ENCODE measurements at regions of chr10 and their contacts with region 1.

Region 1: DNA sequence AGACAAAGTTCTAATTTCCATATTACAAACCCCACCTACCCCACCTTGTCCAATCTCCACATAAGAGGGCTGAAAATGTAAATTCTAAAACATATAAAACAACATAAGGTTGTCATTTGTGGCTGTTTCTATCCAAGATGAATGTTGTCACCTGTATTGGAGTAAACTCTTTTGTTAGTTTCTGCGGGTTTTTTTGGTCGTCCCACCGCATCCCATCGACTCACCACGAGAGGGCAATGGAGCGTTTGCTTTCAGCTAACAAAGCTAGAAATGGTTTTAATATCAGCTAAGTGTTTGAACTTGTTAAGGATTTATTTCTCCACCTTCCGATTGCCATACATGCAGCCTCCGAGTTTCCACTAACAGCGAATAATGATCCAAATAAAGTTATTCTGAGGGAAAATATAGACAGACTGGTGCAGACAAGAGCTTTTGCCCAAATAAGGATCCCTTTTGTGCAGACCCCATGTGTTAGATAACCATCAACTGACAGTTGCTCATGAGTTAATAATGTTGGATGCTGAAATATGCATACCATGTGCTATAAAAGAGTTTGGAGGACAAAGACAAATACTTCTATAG is 137.2 kb downstream of the ARID5B start:
- DNase-seq: no peak
- ATAC-seq: peak; percentile 83
- H3K4me3 ChIP-seq: no peak overlapping the region
- H3K27ac ChIP-seq: peak overlapping the region; percentile 16
- H3K4me1 ChIP-seq: peaks cover 44% of the 10 kb centered on the region
- H3K27me3 ChIP-seq: no peaks in the 10 kb centered on the region
- CTCF ChIP-seq: peak; percentile 70 to 86 (median 81)
- EP300 ChIP-seq: no peak
- POLR2A ChIP-seq: no peak
- RAD21 ChIP-seq: peak; percentile 96

Region 2: DNA sequence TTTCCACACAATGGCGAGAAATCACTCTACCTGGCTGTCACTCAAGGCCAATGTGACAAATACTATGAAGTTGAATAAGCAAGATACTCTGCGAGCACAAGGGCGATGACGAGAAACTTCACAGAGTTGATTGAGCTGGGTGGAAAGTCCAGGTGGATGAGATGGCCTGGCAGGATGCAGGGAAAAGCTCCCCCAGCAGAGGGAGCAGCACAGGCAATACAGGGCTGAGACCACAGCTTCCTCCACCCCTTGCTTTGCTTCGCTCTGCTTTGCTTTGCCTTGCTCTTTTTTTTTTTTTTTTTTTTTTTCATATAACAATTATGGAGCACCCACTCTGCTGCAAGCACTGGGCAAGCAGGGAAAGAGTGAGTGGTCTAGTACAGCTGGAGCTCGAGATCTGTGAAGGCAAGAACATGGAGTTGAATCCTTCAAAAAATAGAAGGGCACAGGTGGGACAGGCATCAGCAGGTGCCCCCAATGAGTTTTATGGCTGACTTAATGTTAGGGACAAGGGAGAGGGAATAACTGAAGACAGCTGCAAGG is 287.7 kb before region 1 on chr10:
- CTCF ChIA-PET with region 1: interaction called, 6 read pairs
- POLR2A ChIA-PET with region 1: no interaction called
- RAD21 ChIA-PET with region 1: interaction called, 6 read pairs
- SMC1A ChIA-PET with region 1: interaction called, 5 read pairs
- in situ Hi-C with region 1: no loop called
- intact Hi-C with region 1: loop called (anchors 10 kb)
- DNase-seq: peak; percentile 27
- ATAC-seq: peak; percentile 98
- H3K4me3 ChIP-seq: no peak overlapping the region
- H3K27ac ChIP-seq: no peak overlapping the region
- H3K4me1 ChIP-seq: peaks cover 13% of the 10 kb centered on the region
- H3K27me3 ChIP-seq: no peaks in the 10 kb centered on the region
- CTCF ChIP-seq: peak; percentile 79 to 87 (median 83)
- EP300 ChIP-seq: no peak
- POLR2A ChIP-seq: no peak
- RAD21 ChIP-seq: peak; percentile 68

Region 3: GRCh38 chr10:61896854-61897661 is 141.6 kb before region 1 on chr10:
- CTCF ChIA-PET with region 1: interaction called, 18 read pairs
- POLR2A ChIA-PET with region 1: interaction called, 5 read pairs
- RAD21 ChIA-PET with region 1: interaction called, 27 read pairs
- SMC1A ChIA-PET with region 1: interaction called, 27 read pairs
- in situ Hi-C with region 1: no loop called
- intact Hi-C with region 1: loop called (anchors 1 kb)
- DNase-seq: peak; percentile 85
- ATAC-seq: peak; percentile 79
- H3K4me3 ChIP-seq: no peak overlapping the region; the same call in 1 of the 2 replicates
- H3K27ac ChIP-seq: peak overlapping the region; percentile 57
- H3K4me1 ChIP-seq: peaks cover 28% of the 10 kb centered on the region
- H3K27me3 ChIP-seq: no peaks in the 10 kb centered on the region
- CTCF ChIP-seq: peak; percentile 76 to 86 (median 85)
- EP300 ChIP-seq: no peak
- POLR2A ChIP-seq: no peak
- RAD21 ChIP-seq: peak; percentile 79

Region 4: DNA sequence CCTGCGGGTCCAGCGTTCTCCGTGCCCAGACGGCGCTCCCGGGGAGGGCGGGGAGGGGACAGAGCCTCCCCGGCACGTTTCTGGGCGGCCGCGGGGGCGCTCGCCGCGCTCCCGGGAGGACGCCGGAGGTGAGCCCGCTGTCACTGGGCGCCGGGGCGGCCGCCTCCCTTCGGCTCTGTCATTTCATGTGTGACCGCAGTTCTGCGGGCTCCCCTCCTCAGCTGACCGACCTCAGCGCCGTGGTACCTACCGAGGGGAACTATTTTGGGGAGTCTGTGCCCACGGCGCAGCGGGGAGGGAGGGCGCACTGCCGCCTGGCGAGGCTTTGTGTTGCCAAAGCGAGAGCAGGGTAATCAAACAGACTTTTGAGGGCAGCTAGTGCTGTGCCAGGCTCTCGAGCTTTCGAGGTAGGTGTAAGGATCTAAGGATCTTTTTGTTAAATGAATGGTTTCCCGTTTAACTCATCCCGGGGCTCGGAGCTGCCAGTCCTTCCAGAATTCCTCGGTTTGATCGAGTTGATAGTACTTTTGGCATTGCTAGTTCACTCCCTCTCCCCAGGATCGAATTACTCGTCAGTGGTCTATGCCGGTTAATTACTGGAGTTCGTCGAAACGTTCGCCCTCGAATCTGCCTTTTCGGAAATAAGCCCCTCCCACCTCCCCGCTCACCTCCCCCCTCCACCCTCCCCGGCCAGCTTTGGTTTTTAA is 135.3 kb before region 1 on chr10:
- CTCF ChIA-PET with region 1: interaction called, 15 read pairs
- POLR2A ChIA-PET with region 1: interaction called, 5 read pairs
- RAD21 ChIA-PET with region 1: interaction called, 27 read pairs
- SMC1A ChIA-PET with region 1: interaction called, 27 read pairs
- in situ Hi-C with region 1: no loop called
- intact Hi-C with region 1: loop called (anchors 1 kb)
- DNase-seq: peak; percentile 53
- ATAC-seq: peak; percentile 65
- H3K4me3 ChIP-seq: peak overlapping the region; percentile 85
- H3K27ac ChIP-seq: peak overlapping the region; percentile 96
- H3K4me1 ChIP-seq: peaks cover 20% of the 10 kb centered on the region
- H3K27me3 ChIP-seq: no peaks in the 10 kb centered on the region
- CTCF ChIP-seq: peak; percentile 0 to 17 (median 12); a peak in 3 of 6 replicates
- EP300 ChIP-seq: peak; percentile 48 to 69; a peak in 2 of 4 replicates
- POLR2A ChIP-seq: peak; percentile 76
- RAD21 ChIP-seq: no peak

Region 5: DNA sequence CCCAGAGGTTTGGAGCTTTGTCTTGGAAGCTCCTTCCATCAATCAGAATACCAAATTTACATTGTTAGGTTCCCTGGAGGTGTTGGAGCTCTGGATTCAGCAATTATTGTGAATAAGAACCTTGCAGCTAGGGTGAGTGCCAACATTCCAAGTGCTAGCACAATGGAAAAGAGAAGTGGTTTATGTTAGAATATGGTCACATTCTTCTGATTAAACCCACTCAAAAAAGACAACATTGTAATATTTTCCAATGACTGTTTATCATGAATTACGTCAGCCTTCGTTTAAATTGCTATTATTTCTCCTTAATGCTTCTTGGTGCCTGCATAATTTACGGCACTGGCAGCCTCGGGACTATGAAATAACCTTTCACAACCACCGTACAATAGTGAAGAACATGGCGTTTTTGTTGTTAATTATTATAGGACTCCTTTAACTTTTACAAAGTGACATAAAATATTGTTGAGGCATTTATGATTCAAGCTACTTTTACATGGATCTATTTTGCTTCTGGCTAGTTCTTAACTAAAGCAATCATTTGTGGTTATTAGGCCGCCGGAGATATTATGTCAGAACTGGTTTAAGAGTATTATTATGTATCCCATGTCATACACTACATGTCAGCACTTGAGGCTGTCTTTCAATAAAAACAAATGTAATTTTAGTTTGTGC is 19.6 kb before region 1 on chr10:
- CTCF ChIA-PET with region 1: interaction called, 17 read pairs
- POLR2A ChIA-PET with region 1: interaction called, 4 read pairs
- RAD21 ChIA-PET with region 1: no interaction called
- SMC1A ChIA-PET with region 1: interaction called, 21 read pairs
- in situ Hi-C with region 1: no loop called
- intact Hi-C with region 1: no loop called
- DNase-seq: no peak
- ATAC-seq: no peak
- H3K4me3 ChIP-seq: peak overlapping the region; percentile 18; the same call in 1 of the 2 replicates
- H3K27ac ChIP-seq: peak overlapping the region; percentile 85
- H3K4me1 ChIP-seq: peaks cover 65% of the 10 kb centered on the region
- H3K27me3 ChIP-seq: no peaks in the 10 kb centered on the region
- CTCF ChIP-seq: no peak
- EP300 ChIP-seq: no peak
- POLR2A ChIP-seq: no peak
- RAD21 ChIP-seq: no peak

Region 6: GRCh38 chr10:62025901-62026879 is 12.5 kb before region 1 on chr10:
- CTCF ChIA-PET with region 1: interaction called, 19 read pairs
- POLR2A ChIA-PET with region 1: no interaction called
- RAD21 ChIA-PET with region 1: interaction called, 5 read pairs
- SMC1A ChIA-PET with region 1: interaction called, 21 read pairs
- in situ Hi-C with region 1: no loop called
- intact Hi-C with region 1: no loop called
- DNase-seq: no peak
- ATAC-seq: peak; percentile 35
- H3K4me3 ChIP-seq: no peak overlapping the region
- H3K27ac ChIP-seq: peak overlapping the region; percentile 11; the same call in 1 of the 2 replicates
- H3K4me1 ChIP-seq: peaks cover 26% of the 10 kb centered on the region
- H3K27me3 ChIP-seq: no peaks in the 10 kb centered on the region
- CTCF ChIP-seq: no peak
- EP300 ChIP-seq: no peak
- POLR2A ChIP-seq: no peak
- RAD21 ChIP-seq: no peak

Region 7: DNA sequence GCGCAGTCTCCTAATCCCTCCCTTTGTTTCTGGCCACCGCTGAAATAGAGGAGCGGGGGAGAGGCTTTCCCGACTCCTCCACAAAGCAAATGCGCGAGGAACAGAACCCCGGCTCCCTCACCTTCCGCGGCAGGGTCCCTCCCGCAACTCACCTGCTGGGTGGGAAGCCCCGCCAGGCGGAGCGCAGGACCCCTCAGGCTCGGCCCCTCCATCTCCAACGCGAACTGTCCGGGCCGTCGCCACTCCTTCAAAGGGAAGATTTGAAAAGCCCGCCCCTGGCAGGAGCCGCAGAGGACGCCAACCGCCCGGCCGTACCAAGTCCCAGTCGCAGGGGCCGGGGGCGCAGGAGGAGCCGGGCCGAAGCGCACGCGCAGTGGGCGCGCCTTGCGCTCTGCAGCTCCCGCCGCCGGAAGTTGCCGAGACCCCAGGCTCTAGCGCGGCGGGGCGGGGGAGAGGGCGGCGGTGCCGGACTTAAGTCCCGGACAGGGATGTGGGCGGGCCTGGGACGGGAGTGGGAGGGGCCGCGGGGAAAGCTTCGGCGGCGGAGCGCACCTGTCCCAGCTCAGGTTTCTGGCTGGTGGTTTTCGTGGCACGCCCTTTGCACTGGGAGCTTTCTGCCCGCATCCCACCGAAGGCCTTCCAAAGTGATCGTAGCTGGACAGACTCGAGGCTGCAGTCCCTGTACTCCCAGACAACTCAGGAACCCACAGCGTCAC is 229.9 kb after region 1 on chr10 and contains the start of gene RTKN2:
- CTCF ChIA-PET with region 1: interaction called, 19 read pairs
- POLR2A ChIA-PET with region 1: no interaction called
- RAD21 ChIA-PET with region 1: no interaction called
- SMC1A ChIA-PET with region 1: interaction called, 3 read pairs
- in situ Hi-C with region 1: no loop called
- intact Hi-C with region 1: no loop called
- DNase-seq: no peak
- ATAC-seq: peak; percentile 85
- H3K4me3 ChIP-seq: peak within 1 kb of the TSS; percentile 74
- H3K27ac ChIP-seq: no peak within 1 kb of the TSS
- H3K4me1 ChIP-seq: no peaks in the 10 kb centered on the region
- H3K27me3 ChIP-seq: peaks cover 10 to 13% of the 10 kb centered on the region in 2 experiments
- CTCF ChIP-seq: no peak
- EP300 ChIP-seq: no peak
- POLR2A ChIP-seq: no peak; the same call in 1 of the 2 replicates
- RAD21 ChIP-seq: no peak
- polyA plus RNA-seq, gene RTKN2: not detected

Region 8: DNA sequence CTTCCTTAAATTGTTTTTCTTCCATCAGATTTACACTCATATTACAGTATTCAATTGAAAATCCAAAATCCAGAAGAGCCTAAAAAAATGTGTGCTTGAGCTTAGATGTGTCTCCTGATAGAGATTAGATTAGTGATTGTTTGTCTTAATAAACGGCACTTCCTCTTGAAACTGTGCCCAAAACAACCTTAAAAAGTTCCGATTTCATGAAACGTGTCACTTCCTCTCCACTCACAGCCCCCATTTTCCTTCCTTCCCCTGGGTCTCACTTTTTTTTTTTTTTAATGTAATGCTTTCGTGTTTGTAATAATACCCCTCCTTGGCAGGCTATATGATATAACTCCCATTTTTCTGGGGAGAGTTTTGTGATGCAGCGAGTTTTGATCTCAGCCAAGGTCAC is 651.0 kb after region 1 on chr10:
- CTCF ChIA-PET with region 1: no interaction called
- POLR2A ChIA-PET with region 1: no interaction called
- RAD21 ChIA-PET with region 1: no interaction called
- SMC1A ChIA-PET with region 1: no interaction called
- in situ Hi-C with region 1: no loop called
- intact Hi-C with region 1: no loop called
- DNase-seq: no peak
- ATAC-seq: peak; percentile 50
- H3K4me3 ChIP-seq: no peak overlapping the region
- H3K27ac ChIP-seq: no peak overlapping the region; the same call in 1 of the 2 replicates
- H3K4me1 ChIP-seq: peaks cover 30% of the 10 kb centered on the region
- H3K27me3 ChIP-seq: no peaks in the 10 kb centered on the region
- CTCF ChIP-seq: no peak
- EP300 ChIP-seq: no peak
- POLR2A ChIP-seq: no peak
- RAD21 ChIP-seq: no peak

Measured in GM12878 (cell line).